H1 (cell line): ENCODE measurements at regions of chr11 and their contacts with region 1.

Region 1: GRCh38 chr11:124415356-124415923 is 9.2 kb downstream of the OR8B4 start:
- DNase-seq: no peak
- H3K4me3 ChIP-seq: no peak overlapping the region
- H3K27ac ChIP-seq: no peak overlapping the region
- H3K4me1 ChIP-seq: no peaks in the 10 kb centered on the region
- H3K27me3 ChIP-seq: no peaks in the 10 kb centered on the region
- CTCF ChIP-seq: peak in 2 of 3 experiments; percentile 25 to 54; a peak in 2 of 4 replicates
- EP300 ChIP-seq: no peak
- POLR2A ChIP-seq: no peak
- RAD21 ChIP-seq: peak; percentile 75 to 78

Region 2: DNA sequence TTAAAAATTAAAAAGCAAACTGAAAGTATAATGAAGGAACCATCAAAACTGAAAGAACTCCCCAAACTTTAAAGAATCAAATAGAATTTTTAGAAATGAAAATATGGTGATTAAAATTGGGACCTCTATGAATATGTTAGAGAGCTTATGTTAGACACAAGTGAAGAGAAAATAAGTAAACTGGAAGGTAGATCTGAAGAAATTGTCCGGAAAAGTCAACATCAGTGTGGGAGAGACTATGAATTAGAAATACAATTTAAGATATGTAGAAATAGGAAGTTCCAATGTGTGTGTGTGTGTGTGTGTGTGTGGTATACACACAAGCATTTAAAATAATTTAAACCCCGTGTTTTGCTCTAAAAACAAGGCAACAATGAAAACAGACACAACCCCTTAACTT is 14.2 kb after region 1 on chr11:
- CTCF ChIA-PET with region 1: interaction called, 24 read pairs
- POLR2A ChIA-PET with region 1: no interaction called
- DNase-seq: no peak
- H3K4me3 ChIP-seq: no peak overlapping the region
- H3K27ac ChIP-seq: no peak overlapping the region
- H3K4me1 ChIP-seq: no peaks in the 10 kb centered on the region
- H3K27me3 ChIP-seq: peaks cover 0 to 2% (median 0%) of the 10 kb centered on the region in 4 experiments; a peak in 1 of 7 replicates
- CTCF ChIP-seq: no peak
- EP300 ChIP-seq: no peak
- POLR2A ChIP-seq: no peak
- RAD21 ChIP-seq: no peak

Region 3: GRCh38 chr11:124473476-124473875 is 58.0 kb after region 1 on chr11:
- CTCF ChIA-PET with region 1: no interaction called
- POLR2A ChIA-PET with region 1: no interaction called
- DNase-seq: no peak
- H3K4me3 ChIP-seq: no peak overlapping the region
- H3K27ac ChIP-seq: no peak overlapping the region
- H3K4me1 ChIP-seq: no peaks in the 10 kb centered on the region
- H3K27me3 ChIP-seq: no peaks in the 10 kb centered on the region
- CTCF ChIP-seq: no peak
- EP300 ChIP-seq: no peak
- POLR2A ChIP-seq: no peak
- RAD21 ChIP-seq: no peak

Region 4: GRCh38 chr11:124536520-124536919 is 121.1 kb after region 1 on chr11:
- CTCF ChIA-PET with region 1: interaction called, 12 read pairs
- POLR2A ChIA-PET with region 1: no interaction called
- DNase-seq: peak; percentile 47 to 59
- H3K4me3 ChIP-seq: no peak overlapping the region
- H3K27ac ChIP-seq: no peak overlapping the region
- H3K4me1 ChIP-seq: peaks cover 0 to 5% (median under 1%) of the 10 kb centered on the region in 4 experiments; a peak in 4 of 7 replicates
- H3K27me3 ChIP-seq: no peaks in the 10 kb centered on the region
- CTCF ChIP-seq: peak in 2 of 3 experiments; percentile 24 to 49; a peak in 3 of 4 replicates
- EP300 ChIP-seq: no peak
- POLR2A ChIP-seq: no peak
- RAD21 ChIP-seq: peak; percentile 44 to 59

Region 5: GRCh38 chr11:124586238-124586860 is 170.9 kb after region 1 on chr11:
- CTCF ChIA-PET with region 1: interaction called, 59 read pairs
- POLR2A ChIA-PET with region 1: no interaction called
- DNase-seq: peak; percentile 39 to 66
- H3K4me3 ChIP-seq: no peak overlapping the region
- H3K27ac ChIP-seq: no peak overlapping the region
- H3K4me1 ChIP-seq: peaks cover 0 to 3% (median 0%) of the 10 kb centered on the region in 4 experiments; a peak in 1 of 7 replicates
- H3K27me3 ChIP-seq: no peaks in the 10 kb centered on the region
- CTCF ChIP-seq: peak; percentile 19 to 69 (median 66)
- EP300 ChIP-seq: no peak
- POLR2A ChIP-seq: no peak
- RAD21 ChIP-seq: peak; percentile 57 to 72